ENCODE measurements at regions of chr6 and their contacts with region 1.

Region 1: GRCh38 chr6:74114428-74114827 is 418.4 kb downstream of the CD109 start:
- DNase-seq: no peak
- H3K4me3 ChIP-seq: no peak overlapping the region
- H3K27ac ChIP-seq: no peak overlapping the region
- H3K4me1 ChIP-seq: no peaks in the 10 kb centered on the region
- H3K27me3 ChIP-seq: no peaks in the 10 kb centered on the region
- CTCF ChIP-seq: no peak
- POLR2A ChIP-seq: no peak

Region 2: GRCh38 chr6:73752943-73753342 is 361.5 kb before region 1 on chr6:
- intact Hi-C with region 1: no loop called
- DNase-seq: no peak
- H3K4me3 ChIP-seq: no peak overlapping the region
- H3K27ac ChIP-seq: no peak overlapping the region
- H3K4me1 ChIP-seq: no peaks in the 10 kb centered on the region
- H3K27me3 ChIP-seq: no peaks in the 10 kb centered on the region
- CTCF ChIP-seq: no peak
- POLR2A ChIP-seq: no peak

Region 3: GRCh38 chr6:74100719-74101287 is 13.6 kb before region 1 on chr6:
- intact Hi-C with region 1: loop called (anchors 1 kb)
- DNase-seq: no peak
- H3K4me3 ChIP-seq: no peak overlapping the region
- H3K27ac ChIP-seq: no peak overlapping the region
- H3K4me1 ChIP-seq: no peaks in the 10 kb centered on the region
- H3K27me3 ChIP-seq: no peaks in the 10 kb centered on the region
- CTCF ChIP-seq: no peak
- POLR2A ChIP-seq: no peak